ENCODE measurements at regions of chr20 and their contacts with region 1.

Region 1: GRCh38 chr20:45362804-45363610 is at the start of gene SYS1:
- DNase-seq: peak; percentile 98 to 99 (median 99)
- H3K4me3 ChIP-seq: peak within 1 kb of the TSS; percentile 67 to 83
- H3K4me3 Mint-ChIP-seq: peak within 1 kb of the TSS; percentile 95 to 99 (median 98)
- H3K27ac ChIP-seq: peak within 1 kb of the TSS; percentile 97
- H3K27ac Mint-ChIP-seq: peak within 1 kb of the TSS; percentile 98 to 100 (median 100)
- H3K4me1 ChIP-seq: peaks cover 41% of the 10 kb centered on the region
- H3K4me1 Mint-ChIP-seq: peaks cover 28 to 59% (median 52%) of the 10 kb centered on the region in 4 donors
- H3K27me3 ChIP-seq: no peaks in the 10 kb centered on the region
- H3K27me3 Mint-ChIP-seq: no peaks in the 10 kb centered on the region
- total RNA-seq, gene SYS1: 56.4 to 56.6 TPM

Region 2: DNA sequence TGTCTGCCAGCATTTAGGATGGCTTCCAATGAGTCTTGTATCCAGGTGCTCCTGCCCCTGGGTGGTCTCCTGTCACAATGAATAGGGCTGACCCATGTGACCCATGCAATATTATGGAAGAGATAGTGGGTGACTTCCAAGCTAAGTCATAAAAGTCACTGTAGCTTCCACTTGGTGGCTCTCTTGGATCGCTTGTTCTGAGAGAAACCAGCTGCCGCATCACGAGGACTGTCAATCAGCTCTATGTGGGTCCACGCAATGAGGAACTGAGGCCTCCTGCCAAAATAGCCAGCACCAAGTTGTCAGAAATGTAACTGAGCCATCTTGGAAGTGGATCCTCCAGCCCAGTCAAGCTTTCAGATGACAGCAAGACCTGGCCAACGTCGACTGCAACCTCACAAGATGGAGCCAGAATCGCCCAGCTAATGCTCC is 40.0 kb before region 1 on chr20:
- CTCF ChIA-PET with region 1: interaction called, 78 read pairs
- POLR2A ChIA-PET with region 1: interaction called, 9 read pairs
- intact Hi-C with region 1: loop called (anchors 1 kb)
- DNase-seq: no peak
- H3K4me3 ChIP-seq: no peak overlapping the region
- H3K4me3 Mint-ChIP-seq: no peak overlapping the region
- H3K27ac ChIP-seq: no peak overlapping the region
- H3K27ac Mint-ChIP-seq: no peak overlapping the region
- H3K4me1 ChIP-seq: peaks cover 29% of the 10 kb centered on the region
- H3K4me1 Mint-ChIP-seq: peaks cover 13 to 32% (median 22%) of the 10 kb centered on the region in 4 donors
- H3K27me3 ChIP-seq: no peaks in the 10 kb centered on the region
- H3K27me3 Mint-ChIP-seq: no peaks in the 10 kb centered on the region

Region 3: GRCh38 chr20:45336530-45337366 is 26.3 kb before region 1 on chr20:
- CTCF ChIA-PET with region 1: no interaction called
- POLR2A ChIA-PET with region 1: no interaction called
- intact Hi-C with region 1: no loop called
- DNase-seq: no peak
- H3K4me3 ChIP-seq: no peak overlapping the region
- H3K4me3 Mint-ChIP-seq: no peak overlapping the region
- H3K27ac ChIP-seq: no peak overlapping the region
- H3K27ac Mint-ChIP-seq: peak overlapping the region in 2 of 7 donors; percentile 13 to 36
- H3K4me1 ChIP-seq: no peaks in the 10 kb centered on the region
- H3K4me1 Mint-ChIP-seq: no peaks in the 10 kb centered on the region
- H3K27me3 ChIP-seq: no peaks in the 10 kb centered on the region
- H3K27me3 Mint-ChIP-seq: no peaks in the 10 kb centered on the region

Region 4: DNA sequence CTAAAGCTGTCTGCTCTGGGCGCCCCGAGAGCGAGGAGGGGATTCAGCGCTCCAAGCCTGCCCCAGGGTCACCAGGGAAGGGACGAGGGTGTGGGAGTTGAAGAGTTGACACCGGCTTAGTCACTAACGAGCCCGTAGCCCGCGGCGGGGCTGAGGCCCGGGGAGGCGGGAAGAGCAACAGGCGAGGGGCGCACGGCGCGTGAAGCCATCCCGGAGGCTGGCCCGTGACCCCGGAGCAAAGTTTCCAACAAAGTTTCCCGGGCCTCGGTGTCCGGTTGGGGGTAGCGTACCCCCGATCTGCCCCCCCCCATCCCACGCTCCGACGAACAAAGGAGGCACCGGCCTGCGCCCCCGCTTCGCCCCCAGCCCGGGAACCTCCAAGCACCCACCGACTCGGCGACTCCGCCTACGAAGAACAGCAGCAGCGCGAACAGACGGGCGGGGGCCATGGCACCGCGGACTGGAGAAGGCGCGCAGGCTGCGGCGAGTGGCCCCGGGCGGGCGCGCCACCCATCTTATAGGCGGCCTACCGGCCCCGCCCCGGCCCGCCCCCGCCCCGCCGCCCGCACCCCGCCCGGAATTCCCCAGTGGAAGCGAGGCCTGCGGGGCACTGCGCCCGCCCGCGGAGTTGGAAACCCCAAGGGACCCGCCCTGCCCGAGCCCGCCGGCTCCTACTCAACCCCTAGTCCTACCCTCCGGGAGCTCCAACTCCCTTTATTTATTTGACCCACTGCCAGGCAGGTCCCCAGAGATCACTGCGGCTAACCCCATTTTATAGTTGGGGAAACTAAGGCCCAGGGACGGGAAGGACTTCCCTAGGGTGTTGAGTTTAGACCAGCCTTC is 14.8 kb before region 1 on chr20 and contains the start of gene SDC4:
- CTCF ChIA-PET with region 1: interaction called, 4 read pairs
- POLR2A ChIA-PET with region 1: interaction called, 15 read pairs
- intact Hi-C with region 1: no loop called
- DNase-seq: peak; percentile 50 to 65 (median 55)
- H3K4me3 ChIP-seq: peak within 1 kb of the TSS; percentile 42 to 72
- H3K4me3 Mint-ChIP-seq: peak within 1 kb of the TSS; percentile 75 to 94 (median 84)
- H3K27ac ChIP-seq: peak within 1 kb of the TSS; percentile 58
- H3K27ac Mint-ChIP-seq: peak within 1 kb of the TSS in 6 of 7 donors; percentile 35 to 78 (median 55)
- H3K4me1 ChIP-seq: peaks cover 29% of the 10 kb centered on the region
- H3K4me1 Mint-ChIP-seq: peaks cover 3 to 37% (median 17%) of the 10 kb centered on the region in 4 donors
- H3K27me3 ChIP-seq: no peaks in the 10 kb centered on the region
- H3K27me3 Mint-ChIP-seq: no peaks in the 10 kb centered on the region
- total RNA-seq, gene SDC4: 3.8 to 3.9 TPM

Region 5: GRCh38 chr20:45406259-45407066 is 43.5 kb after region 1 on chr20:
- CTCF ChIA-PET with region 1: interaction called, 18 read pairs
- POLR2A ChIA-PET with region 1: interaction called, 19 read pairs
- intact Hi-C with region 1: no loop called
- DNase-seq: peak; percentile 32 to 47 (median 37)
- H3K4me3 ChIP-seq: peak overlapping the region; percentile 49 to 79
- H3K4me3 Mint-ChIP-seq: peak overlapping the region; percentile 80 to 90 (median 84)
- H3K27ac ChIP-seq: peak overlapping the region; percentile 58
- H3K27ac Mint-ChIP-seq: peak overlapping the region; percentile 19 to 91 (median 87)
- H3K4me1 ChIP-seq: peaks cover 19% of the 10 kb centered on the region
- H3K4me1 Mint-ChIP-seq: peaks cover 12 to 20% (median 15%) of the 10 kb centered on the region in 4 donors
- H3K27me3 ChIP-seq: no peaks in the 10 kb centered on the region
- H3K27me3 Mint-ChIP-seq: no peaks in the 10 kb centered on the region

Region 6: DNA sequence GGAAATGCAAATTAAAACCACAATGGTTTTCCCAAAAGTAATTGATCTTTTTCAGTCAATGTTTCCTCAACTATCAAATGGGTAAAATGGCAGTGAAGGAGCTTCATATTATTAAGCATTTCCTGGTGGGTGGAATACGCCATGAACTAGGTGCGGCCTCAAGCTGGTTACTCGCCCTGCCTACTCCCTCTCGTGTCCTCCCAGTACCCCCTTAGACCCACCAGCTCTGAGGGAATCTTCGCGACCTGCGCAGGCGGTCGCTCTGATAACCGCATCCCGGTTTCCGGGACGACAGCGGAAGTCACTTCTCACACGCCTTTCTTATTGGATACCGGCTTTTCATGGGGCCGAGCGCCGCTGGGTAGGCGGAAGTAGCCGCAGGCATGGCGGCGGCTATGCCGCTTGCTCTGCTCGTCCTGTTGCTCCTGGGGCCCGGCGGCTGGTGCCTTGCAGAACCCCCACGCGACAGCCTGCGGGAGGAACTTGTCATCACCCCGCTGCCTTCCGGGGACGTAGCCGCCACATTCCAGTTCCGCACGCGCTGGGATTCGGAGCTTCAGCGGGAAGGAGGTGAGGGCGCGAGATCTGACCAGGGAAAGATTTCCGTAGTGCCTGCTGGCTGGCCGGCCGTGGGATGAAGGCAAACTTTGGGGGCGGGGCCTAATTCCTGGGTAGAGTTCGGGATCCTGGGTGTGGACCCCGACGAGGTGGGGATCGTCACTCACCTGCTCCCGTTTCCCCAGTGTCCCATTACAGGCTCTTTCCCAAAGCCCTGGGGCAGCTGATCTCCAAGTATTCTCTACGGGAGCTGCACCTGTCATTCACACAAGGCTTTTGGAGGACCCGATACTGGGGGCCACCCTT is 53.0 kb after region 1 on chr20 and contains the start of gene PIGT:
- CTCF ChIA-PET with region 1: interaction called, 19 read pairs
- POLR2A ChIA-PET with region 1: interaction called, 121 read pairs
- intact Hi-C with region 1: loop called (anchors 1 kb)
- DNase-seq: peak; percentile 91 to 96 (median 93)
- H3K4me3 ChIP-seq: peak within 1 kb of the TSS; percentile 51 to 87
- H3K4me3 Mint-ChIP-seq: peak within 1 kb of the TSS; percentile 95 to 99 (median 96)
- H3K27ac ChIP-seq: peak within 1 kb of the TSS; percentile 91
- H3K27ac Mint-ChIP-seq: peak within 1 kb of the TSS; percentile 96 to 99 (median 98)
- H3K4me1 ChIP-seq: peaks cover 27% of the 10 kb centered on the region
- H3K4me1 Mint-ChIP-seq: peaks cover 23 to 51% (median 35%) of the 10 kb centered on the region in 4 donors
- H3K27me3 ChIP-seq: no peaks in the 10 kb centered on the region
- H3K27me3 Mint-ChIP-seq: no peaks in the 10 kb centered on the region
- total RNA-seq, gene PIGT: 81.9 to 84.5 TPM

Region 7: DNA sequence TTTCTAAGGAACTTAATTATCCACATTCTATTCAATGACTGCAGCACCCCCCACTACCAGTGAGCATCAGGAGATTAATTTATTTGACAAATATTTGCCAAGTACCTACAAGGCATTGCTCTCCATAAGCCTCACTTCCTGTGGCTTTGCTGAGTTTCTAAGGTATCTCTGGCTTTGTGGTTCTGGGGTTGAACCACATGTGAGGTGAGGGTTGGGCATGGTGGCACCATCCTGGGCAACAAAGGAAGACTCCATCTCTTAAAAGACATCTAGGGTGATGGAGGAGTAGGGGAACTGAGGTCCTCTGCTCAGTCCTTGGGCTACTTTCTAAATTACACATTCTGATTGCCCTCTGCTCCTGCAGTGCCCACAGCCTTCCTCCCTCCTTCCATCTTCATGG is 81.0 kb after region 1 on chr20:
- CTCF ChIA-PET with region 1: interaction called, 543 read pairs
- POLR2A ChIA-PET with region 1: interaction called, 113 read pairs
- intact Hi-C with region 1: no loop called
- DNase-seq: peak; percentile 54 to 70 (median 69)
- H3K4me3 ChIP-seq: peak overlapping the region in 1 of 2 donors; percentile 2
- H3K4me3 Mint-ChIP-seq: peak overlapping the region in 6 of 8 donors; percentile 22 to 66 (median 48)
- H3K27ac ChIP-seq: no peak overlapping the region
- H3K27ac Mint-ChIP-seq: no peak overlapping the region
- H3K4me1 ChIP-seq: peaks cover 15% of the 10 kb centered on the region
- H3K4me1 Mint-ChIP-seq: peaks cover 21 to 29% (median 26%) of the 10 kb centered on the region in 4 donors
- H3K27me3 ChIP-seq: no peaks in the 10 kb centered on the region
- H3K27me3 Mint-ChIP-seq: peaks cover 6 to 8% of the 10 kb centered on the region in 2 donors

Region 8: DNA sequence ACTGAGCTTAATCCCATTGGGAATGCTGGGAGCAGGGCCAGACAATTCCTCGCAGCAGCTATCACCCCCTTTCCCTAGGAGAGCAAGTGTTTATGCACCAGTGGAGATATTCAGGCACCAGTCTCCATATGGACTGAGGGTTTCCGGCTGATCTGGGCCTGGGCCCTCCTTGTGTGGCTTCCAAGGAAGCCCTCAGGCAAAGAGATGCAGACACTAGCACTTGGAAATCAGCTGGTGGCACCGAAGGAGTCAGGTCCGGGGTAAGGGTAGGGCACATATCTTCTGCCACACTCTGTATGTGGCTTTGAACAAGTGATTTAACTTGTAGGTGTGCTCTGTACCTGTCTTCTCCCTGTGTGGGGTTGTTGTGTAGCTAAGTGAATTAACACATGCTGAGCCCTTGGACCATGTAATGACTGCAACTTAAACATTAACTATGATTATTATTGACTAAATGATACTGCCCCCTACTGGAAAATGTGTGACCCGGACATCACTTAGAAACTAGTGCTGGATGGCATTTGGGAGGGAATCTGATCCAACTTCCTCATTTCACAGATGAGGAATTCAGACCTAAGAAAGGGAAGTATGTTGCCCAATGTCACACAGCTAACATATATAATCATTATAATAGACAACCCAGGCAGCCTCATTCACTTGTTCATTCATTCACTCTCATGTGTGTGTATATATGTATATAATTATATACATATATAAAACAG is 87.3 kb after region 1 on chr20:
- CTCF ChIA-PET with region 1: interaction called, 19 read pairs
- POLR2A ChIA-PET with region 1: interaction called, 14 read pairs
- intact Hi-C with region 1: loop called (anchors 1 kb)
- DNase-seq: peak in 4 of 5 donors; percentile 36 to 47 (median 46)
- H3K4me3 ChIP-seq: no peak overlapping the region
- H3K4me3 Mint-ChIP-seq: no peak overlapping the region
- H3K27ac ChIP-seq: no peak overlapping the region
- H3K27ac Mint-ChIP-seq: no peak overlapping the region
- H3K4me1 ChIP-seq: no peaks in the 10 kb centered on the region
- H3K4me1 Mint-ChIP-seq: peaks cover 6 to 11% (median 8%) of the 10 kb centered on the region in 4 donors
- H3K27me3 ChIP-seq: no peaks in the 10 kb centered on the region
- H3K27me3 Mint-ChIP-seq: peaks cover 4 to 8% of the 10 kb centered on the region in 2 donors

Measured in CD4-positive, alpha-beta memory T cell (primary cell).